Activated T-helper 2 cell treated with anti-CD3 and anti-CD28 coated beads, Interferon-gamma antibody, Interleukin-2, Interleukin-4, amounts not matched to agents 10 μg/mL and 5 μg/mL and 100 μg/mL, durations not matched to agents 14 hours and 24 hours and 36 hours (primary cell): ENCODE measurements at regions of chr1 and their contacts with region 1.

Region 1: GRCh38 chr1:15417365-15417934 is 7.8 kb downstream of the EFHD2 start:
- DNase-seq: peak; percentile 64
- H3K4me3 Mint-ChIP-seq: peak overlapping the region; percentile 66
- H3K27ac Mint-ChIP-seq: peak overlapping the region; percentile 78
- H3K4me1 Mint-ChIP-seq: peaks cover 54% of the 10 kb centered on the region
- H3K27me3 Mint-ChIP-seq: no peaks in the 10 kb centered on the region

Region 2: DNA sequence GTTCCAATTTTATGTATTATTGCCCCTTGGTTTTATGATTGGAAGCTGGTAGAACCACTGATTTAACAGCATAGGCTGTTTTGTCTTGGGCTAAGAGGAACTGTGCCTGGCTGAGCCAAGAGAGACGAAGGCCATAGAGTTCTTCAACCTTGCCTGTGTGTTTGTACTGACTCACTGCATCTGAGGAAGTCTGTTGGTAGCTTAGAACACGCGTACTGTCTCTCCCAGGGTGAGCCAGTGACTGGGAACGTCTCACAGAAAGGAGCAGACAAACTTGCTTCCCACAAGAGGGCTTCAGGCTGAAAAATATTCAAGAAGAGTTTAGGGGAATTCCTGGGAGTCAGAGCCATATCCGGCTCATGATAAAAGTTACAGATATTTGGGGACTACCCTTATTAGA is 249.0 kb before region 1 on chr1:
- intact Hi-C with region 1: no loop called
- DNase-seq: no peak
- H3K4me3 Mint-ChIP-seq: no peak overlapping the region
- H3K27ac Mint-ChIP-seq: no peak overlapping the region
- H3K4me1 Mint-ChIP-seq: peaks cover 6% of the 10 kb centered on the region
- H3K27me3 Mint-ChIP-seq: peaks cover 24% of the 10 kb centered on the region

Region 3: DNA sequence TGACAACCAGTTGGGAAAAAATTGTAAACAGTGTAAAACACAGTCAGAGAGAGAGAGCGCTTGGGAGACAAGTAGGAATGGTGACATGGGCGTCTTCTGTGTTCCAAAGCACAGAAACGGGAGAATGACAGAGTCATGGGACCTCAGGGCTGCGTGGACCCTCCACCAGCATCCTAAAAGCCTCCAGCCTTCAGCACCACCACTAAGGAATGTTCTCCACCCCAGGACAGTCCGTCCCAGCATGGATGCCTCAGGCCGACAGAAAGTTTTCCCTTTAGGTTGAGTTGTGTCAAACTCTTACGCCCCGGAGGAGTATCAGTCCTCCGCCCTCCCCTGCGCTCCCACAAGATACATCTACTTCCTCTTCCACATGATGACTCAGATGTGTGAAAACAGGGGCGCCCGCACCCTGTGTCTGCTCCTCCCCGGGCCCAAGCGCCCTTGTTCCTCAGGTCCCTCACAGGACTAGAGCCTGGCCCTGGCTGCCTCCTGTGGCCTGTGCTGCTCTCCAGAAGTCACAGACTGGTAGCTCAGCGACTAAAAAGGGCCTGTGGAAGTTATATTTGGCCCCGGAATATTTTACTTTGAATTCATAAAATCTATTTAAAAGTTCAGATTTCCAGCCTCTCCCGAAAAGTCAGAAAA is 71.6 kb before region 1 on chr1:
- intact Hi-C with region 1: loop called (anchors 2 kb)
- DNase-seq: peak; percentile 65
- H3K4me3 Mint-ChIP-seq: peak overlapping the region; percentile 28
- H3K27ac Mint-ChIP-seq: peak overlapping the region; percentile 74
- H3K4me1 Mint-ChIP-seq: peaks cover 75% of the 10 kb centered on the region
- H3K27me3 Mint-ChIP-seq: peaks cover 2% of the 10 kb centered on the region

Region 4: DNA sequence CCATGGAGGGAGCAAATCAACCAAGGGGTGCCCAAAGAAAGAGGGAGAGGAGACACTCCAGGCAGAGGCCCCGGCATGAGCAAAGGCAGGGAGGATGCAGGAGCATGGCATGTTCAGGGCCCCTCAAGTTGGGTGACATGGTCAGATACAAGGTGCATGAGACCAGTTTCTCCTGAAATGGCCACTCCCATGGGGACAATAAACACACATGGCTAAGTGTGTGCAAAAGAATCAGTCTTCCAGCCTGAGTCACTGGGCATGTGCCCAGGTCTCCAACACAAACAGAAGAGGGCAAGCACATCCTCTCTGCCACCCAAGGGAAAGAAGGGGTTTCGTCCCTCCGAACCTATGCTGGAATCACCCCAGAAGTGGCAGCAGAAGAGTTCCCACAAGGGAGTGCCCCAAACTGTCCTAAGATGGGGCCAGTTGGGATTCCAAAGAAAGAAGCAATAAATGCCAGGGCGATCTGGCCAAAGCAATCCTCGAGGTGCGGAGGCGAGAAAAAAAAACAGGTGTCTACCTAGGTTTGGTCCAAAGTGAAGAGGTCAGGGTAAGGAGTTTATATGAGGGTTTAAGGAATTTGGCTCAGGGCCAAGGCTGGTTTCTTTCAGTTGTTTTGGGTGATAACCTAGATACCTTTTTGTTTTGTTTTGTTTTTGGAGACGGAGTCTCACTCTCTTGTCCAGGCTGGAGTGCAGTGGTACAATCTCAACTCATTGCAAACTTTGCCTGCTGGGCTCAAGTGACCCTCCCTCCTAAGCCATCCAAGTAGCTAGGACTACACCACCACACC is 93.4 kb after region 1 on chr1:
- intact Hi-C with region 1: loop called (anchors 5 kb)
- DNase-seq: no peak
- H3K4me3 Mint-ChIP-seq: no peak overlapping the region
- H3K27ac Mint-ChIP-seq: peak overlapping the region; percentile 19
- H3K4me1 Mint-ChIP-seq: peaks cover 30% of the 10 kb centered on the region
- H3K27me3 Mint-ChIP-seq: no peaks in the 10 kb centered on the region

Region 5: GRCh38 chr1:15526490-15527339 is 109.3 kb after region 1 on chr1 and contains the start of gene DNAJC16:
- intact Hi-C with region 1: no loop called
- DNase-seq: peak; percentile 99
- H3K4me3 Mint-ChIP-seq: peak within 1 kb of the TSS; percentile 87
- H3K27ac Mint-ChIP-seq: peak within 1 kb of the TSS; percentile 98
- H3K4me1 Mint-ChIP-seq: peaks cover 44% of the 10 kb centered on the region
- H3K27me3 Mint-ChIP-seq: no peaks in the 10 kb centered on the region
- total RNA-seq, gene DNAJC16: 10.9 and 18.7 TPM in 2 replicates

Region 6: GRCh38 chr1:15684468-15685291 is 267.2 kb after region 1 on chr1:
- intact Hi-C with region 1: no loop called
- DNase-seq: peak; percentile 26
- H3K4me3 Mint-ChIP-seq: peak overlapping the region; percentile 83
- H3K27ac Mint-ChIP-seq: peak overlapping the region; percentile 73
- H3K4me1 Mint-ChIP-seq: peaks cover 22% of the 10 kb centered on the region
- H3K27me3 Mint-ChIP-seq: no peaks in the 10 kb centered on the region